Transverse colon (tissue), 4 donors: ENCODE measurements at regions of chr6 and their contacts with region 1.

Region 1: DNA sequence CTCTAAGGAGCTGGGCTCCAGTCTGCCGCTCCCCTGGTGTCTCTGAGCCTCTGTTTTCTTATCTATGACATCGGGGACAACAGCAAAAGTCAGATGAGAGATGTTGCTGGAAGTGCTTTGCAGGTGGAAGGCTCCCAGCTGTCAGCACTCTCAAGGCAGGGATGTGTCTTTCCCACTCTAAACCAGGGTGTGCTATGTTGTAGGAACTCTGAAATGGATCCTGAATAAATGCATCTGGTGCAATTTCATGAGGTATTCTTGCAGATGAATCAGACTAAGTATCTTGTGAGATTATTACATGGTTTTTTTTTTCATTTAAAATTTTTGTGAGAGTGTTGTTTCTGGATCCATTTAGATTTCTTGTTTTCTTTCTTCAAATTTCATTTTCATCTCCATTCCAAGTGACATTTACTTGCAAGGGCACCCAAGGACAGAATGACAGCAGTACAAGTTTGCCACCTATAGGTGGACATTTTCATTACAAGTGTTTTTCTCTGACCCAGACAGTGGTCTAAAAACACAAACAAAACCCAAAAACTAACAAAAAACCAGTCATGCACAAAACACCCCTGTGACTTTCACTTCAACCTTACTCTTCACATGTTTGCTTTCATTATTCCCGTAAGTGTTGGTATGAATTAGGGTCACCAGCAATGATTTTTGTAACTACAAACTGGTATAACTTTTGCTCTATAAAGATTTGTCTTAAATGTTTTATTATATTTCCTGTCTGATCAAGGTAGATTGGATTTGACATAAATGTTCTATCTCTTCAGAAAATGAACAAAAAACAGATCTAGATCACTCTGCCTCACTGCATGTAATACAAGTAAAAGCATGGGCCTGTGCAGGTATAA is 14.7 kb upstream of the SIM1 start:
- DNase-seq: no peak
- H3K4me3 ChIP-seq: no peak overlapping the region
- H3K27ac ChIP-seq: no peak overlapping the region
- H3K4me1 ChIP-seq: no peaks in the 10 kb centered on the region
- H3K27me3 ChIP-seq: peaks cover 33% of the 10 kb centered on the region
- CTCF ChIP-seq: peak; percentile 52 to 69 (median 62)
- EP300 ChIP-seq: no peak
- POLR2A ChIP-seq: no peak

Region 2: DNA sequence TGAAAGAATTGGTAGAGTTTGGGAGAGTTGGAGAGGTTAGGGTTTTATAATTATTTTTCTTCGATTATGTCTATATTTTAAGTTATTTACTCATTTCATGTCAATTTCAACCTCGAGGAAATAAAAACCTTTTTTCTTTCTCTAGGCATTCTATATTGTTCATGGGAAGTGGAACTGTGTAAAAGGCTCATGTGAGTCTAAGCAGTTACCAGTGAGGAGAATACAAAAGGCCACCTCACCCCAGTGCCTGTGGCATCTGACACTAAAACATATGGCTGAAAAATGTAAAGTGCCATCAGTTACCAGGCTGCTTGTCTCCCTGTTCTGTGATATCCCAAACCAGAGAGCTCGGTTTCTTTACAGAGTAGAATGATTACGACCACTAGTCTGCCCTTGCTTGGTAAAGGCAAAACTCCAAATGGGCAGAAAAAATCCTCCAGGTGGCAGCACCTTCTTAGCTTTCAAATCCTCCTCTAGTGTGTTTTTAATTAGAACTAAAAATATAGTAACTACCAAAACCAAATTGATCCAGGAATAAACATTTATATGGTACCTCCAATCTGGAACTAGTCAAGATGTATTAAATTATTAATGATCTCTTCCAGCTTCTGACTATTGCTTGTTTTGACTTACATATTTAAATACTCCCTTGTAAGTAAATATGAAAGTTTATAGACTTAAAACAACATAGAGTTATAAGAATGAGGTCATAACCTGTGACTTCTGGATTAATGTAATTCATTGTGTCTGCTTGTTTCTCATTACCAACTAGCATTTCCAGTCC is 362.8 kb before region 1 on chr6:
- in situ Hi-C with region 1: loop called (anchors 5 to 10 kb)
- intact Hi-C with region 1: loop called (anchors 10 kb)
- DNase-seq: peak; percentile 12
- H3K4me3 ChIP-seq: no peak overlapping the region
- H3K27ac ChIP-seq: no peak overlapping the region
- H3K4me1 ChIP-seq: no peaks in the 10 kb centered on the region
- H3K27me3 ChIP-seq: peaks cover 5% of the 10 kb centered on the region
- CTCF ChIP-seq: peak; percentile 41 to 48 (median 45)
- EP300 ChIP-seq: no peak
- POLR2A ChIP-seq: no peak

Region 3: GRCh38 chr6:100126790-100127484 is 352.5 kb before region 1 on chr6:
- in situ Hi-C with region 1: loop called in 1 of 4 experiments (anchors 10 kb)
- intact Hi-C with region 1: no loop called
- DNase-seq: no peak
- H3K4me3 ChIP-seq: no peak overlapping the region
- H3K27ac ChIP-seq: no peak overlapping the region
- H3K4me1 ChIP-seq: no peaks in the 10 kb centered on the region
- H3K27me3 ChIP-seq: no peaks in the 10 kb centered on the region
- CTCF ChIP-seq: no peak
- EP300 ChIP-seq: no peak
- POLR2A ChIP-seq: no peak